H1 (cell line): ENCODE measurements at regions of chr4 and their contacts with region 1.

Region 1: GRCh38 chr4:48526406-48526805 is 36.4 kb downstream of the ZAR1 start:
- DNase-seq: no peak
- H3K4me3 ChIP-seq: no peak overlapping the region
- H3K27ac ChIP-seq: no peak overlapping the region
- H3K4me1 ChIP-seq: no peaks in the 10 kb centered on the region
- H3K27me3 ChIP-seq: no peaks in the 10 kb centered on the region
- CTCF ChIP-seq: no peak
- EP300 ChIP-seq: no peak
- POLR2A ChIP-seq: no peak
- RAD21 ChIP-seq: no peak

Region 2: GRCh38 chr4:48546336-48546735 is 19.9 kb after region 1 on chr4:
- CTCF ChIA-PET with region 1: interaction called, 14 read pairs
- POLR2A ChIA-PET with region 1: no interaction called
- DNase-seq: no peak
- H3K4me3 ChIP-seq: no peak overlapping the region
- H3K27ac ChIP-seq: no peak overlapping the region
- H3K4me1 ChIP-seq: no peaks in the 10 kb centered on the region; a peak in 1 of 7 replicates
- H3K27me3 ChIP-seq: peaks cover 0 to 1% (median 0%) of the 10 kb centered on the region in 4 experiments; a peak in 1 of 7 replicates
- CTCF ChIP-seq: peak in 2 of 3 experiments; percentile 59 to 72; a peak in 3 of 4 replicates
- EP300 ChIP-seq: no peak
- POLR2A ChIP-seq: no peak
- RAD21 ChIP-seq: peak; percentile 81 to 84

Region 3: GRCh38 chr4:48564151-48564550 is 37.7 kb after region 1 on chr4:
- CTCF ChIA-PET with region 1: no interaction called
- POLR2A ChIA-PET with region 1: no interaction called
- DNase-seq: no peak
- H3K4me3 ChIP-seq: no peak overlapping the region
- H3K27ac ChIP-seq: no peak overlapping the region
- H3K4me1 ChIP-seq: no peaks in the 10 kb centered on the region
- H3K27me3 ChIP-seq: no peaks in the 10 kb centered on the region
- CTCF ChIP-seq: no peak
- EP300 ChIP-seq: no peak
- POLR2A ChIP-seq: no peak
- RAD21 ChIP-seq: no peak

Region 4: DNA sequence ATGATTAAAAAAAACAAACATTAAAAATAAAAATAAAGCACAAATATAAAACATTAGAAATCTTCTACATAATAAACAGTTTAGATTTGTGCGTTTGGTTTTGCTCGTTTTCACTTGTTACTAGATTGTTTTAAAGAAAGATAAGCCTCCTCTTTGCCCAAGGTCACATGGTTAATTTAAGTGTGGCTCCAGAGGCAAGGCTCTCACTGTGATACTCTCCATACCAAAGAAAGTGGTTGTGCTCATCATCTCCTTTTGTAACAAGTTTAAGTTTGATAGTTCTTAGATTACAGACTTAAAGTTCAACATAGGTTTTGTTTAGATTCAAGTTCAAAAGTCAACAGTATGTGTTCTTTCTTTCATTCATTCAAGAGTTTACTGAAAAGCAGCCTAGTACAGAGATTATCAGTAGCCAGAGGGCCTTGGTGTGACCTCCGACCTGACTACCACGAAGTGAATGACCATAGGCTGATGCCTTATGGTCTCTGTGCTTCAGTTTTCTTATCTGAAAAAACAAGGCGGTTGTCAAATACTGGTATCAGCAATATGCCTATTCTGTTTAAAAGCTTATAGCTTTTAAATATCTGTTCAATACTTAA is 96.9 kb after region 1 on chr4:
- CTCF ChIA-PET with region 1: no interaction called
- POLR2A ChIA-PET with region 1: no interaction called
- DNase-seq: no peak
- H3K4me3 ChIP-seq: no peak overlapping the region
- H3K27ac ChIP-seq: no peak overlapping the region
- H3K4me1 ChIP-seq: no peaks in the 10 kb centered on the region
- H3K27me3 ChIP-seq: no peaks in the 10 kb centered on the region
- CTCF ChIP-seq: no peak
- EP300 ChIP-seq: no peak
- POLR2A ChIP-seq: no peak
- RAD21 ChIP-seq: no peak

Region 5: DNA sequence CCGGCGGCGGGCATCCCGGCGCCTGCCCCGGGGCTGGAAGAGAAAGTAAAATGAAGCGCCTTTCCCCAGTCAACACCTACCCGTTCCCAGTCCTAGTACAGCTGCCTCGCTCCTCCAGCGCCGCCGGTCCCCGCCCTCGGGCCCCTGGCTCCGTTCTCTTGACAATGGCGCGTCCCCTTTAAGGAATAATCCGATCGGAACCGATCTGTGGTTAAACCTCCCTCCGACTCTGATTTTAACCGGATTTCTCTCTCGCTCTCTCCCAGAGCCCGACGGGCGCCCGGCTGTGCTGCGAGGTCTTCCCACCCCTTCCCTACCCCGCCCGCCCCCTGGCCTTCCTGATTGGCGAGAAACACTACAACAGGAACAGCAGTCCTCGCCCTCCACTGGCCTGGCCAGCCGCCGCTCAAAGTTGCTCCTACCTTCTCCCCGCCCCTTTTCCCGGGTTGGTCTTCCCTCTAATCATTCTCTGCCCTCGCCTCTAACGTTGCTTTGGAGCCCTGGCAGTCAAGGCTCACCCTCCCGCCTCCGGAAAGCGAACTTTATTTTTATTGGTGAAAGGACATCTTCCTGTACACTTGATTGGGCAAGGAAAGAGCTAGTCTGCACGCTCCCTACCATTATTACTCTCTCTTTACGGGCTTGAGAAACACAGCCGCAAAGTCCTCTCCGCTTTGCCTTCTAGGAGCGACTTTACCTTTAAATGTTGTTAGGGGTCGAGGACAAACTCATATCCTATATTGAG is 253.8 kb after region 1 on chr4 and contains the start of gene FRYL:
- CTCF ChIA-PET with region 1: no interaction called
- POLR2A ChIA-PET with region 1: no interaction called
- DNase-seq: peak; percentile 96 to 99
- H3K4me3 ChIP-seq: peak within 1 kb of the TSS; percentile 82 to 92 (median 84)
- H3K27ac ChIP-seq: peak within 1 kb of the TSS; percentile 67; the same call in 1 of the 2 replicates
- H3K4me1 ChIP-seq: peaks cover 0 to 8% (median under 1%) of the 10 kb centered on the region in 4 experiments; a peak in 4 of 7 replicates
- H3K27me3 ChIP-seq: no peaks in the 10 kb centered on the region
- CTCF ChIP-seq: no peak
- EP300 ChIP-seq: no peak
- POLR2A ChIP-seq: peak in 1 of 2 experiments; percentile 59; a peak in 2 of 3 replicates
- RAD21 ChIP-seq: peak in 1 of 2 experiments; percentile 23; a peak in 1 of 4 replicates
- total RNA-seq, gene FRYL: 36.5 and 36.8 TPM in 2 replicates